GM10248 (cell line): ENCODE measurements at regions of chr19 and their contacts with region 1.

Region 1: GRCh38 chr19:47523473-47523872 is 8.6 kb upstream of the NAPA start:
- DNase-seq: no peak
- CTCF ChIP-seq: no peak

Region 2: DNA sequence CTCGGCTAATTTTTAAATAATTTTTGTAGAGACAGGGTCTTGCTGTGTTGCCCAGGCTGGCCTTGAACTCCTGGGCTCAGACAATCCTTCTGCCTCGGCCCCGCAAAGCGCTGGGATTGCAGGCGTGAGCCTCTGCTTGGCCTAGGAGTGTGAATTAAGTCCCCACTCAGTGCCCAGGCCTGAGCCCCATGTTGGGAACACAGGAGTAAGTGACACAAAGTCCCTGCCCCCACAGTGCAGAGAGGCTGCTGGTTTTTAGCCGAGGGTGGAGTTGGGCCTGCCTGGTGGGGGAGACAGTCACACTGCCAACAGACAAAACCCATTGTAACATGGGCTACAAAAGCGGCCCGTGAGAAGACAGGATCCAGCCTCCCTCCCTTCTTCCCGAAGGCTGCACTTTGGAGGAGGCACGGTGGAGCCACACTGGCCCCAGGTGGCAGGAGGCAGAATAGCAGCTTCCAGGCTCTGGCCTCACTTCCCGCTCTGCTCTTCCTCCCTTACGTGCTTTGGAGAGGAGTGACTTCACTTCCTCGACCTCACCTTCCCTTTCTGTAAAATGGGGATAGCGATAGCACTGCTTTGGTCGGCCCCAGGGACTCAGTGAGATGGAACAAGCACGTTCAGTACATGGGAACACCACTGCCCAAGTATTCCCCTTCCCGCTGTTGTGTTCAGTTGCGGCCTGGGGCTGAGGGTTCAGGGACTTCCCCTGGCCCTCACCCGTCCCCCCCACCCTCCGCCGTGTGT is 174.6 kb after region 1 on chr19:
- CTCF ChIA-PET with region 1: interaction called, 13 read pairs
- POLR2A ChIA-PET with region 1: no interaction called
- DNase-seq: peak; percentile 85
- CTCF ChIP-seq: peak; percentile 95